Endothelial cell of umbilical vein (primary cell): ENCODE measurements at regions of chr5 and their contacts with region 1.

Region 1: DNA sequence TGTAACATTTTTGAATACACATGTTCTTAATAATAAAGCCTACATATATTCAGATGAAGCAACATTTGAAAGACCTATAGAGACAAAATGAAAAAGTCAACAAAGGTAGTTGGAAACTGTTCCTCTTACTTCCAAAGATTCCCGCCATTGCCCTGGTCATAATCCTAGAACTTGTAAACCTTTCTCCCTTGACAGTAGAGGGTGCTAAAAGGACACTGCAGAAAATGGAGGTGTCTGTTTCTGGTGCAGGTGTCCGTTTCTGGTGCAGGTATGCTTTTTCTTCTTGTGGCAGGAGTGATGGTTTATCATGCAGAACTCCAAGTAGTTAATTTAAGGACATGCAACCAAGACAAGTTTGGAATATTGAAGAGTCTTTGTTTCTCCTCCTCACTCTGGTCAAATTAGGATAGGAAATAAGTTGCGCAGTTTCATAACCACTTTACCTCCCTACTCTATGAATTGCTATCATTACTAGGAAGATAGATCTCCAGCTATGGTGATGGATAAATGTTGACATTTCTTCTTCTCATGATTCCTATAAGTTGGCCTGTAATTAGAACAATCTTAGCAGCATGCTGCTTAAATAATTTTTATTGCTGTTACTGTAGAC is 56.0 kb upstream of the FAM174A start:
- DNase-seq: peak; percentile 24
- H3K4me3 ChIP-seq: no peak overlapping the region
- H3K27ac ChIP-seq: no peak overlapping the region
- H3K4me1 ChIP-seq: no peaks in the 10 kb centered on the region
- H3K27me3 ChIP-seq: no peaks in the 10 kb centered on the region
- CTCF ChIP-seq: peak; percentile 20 to 25
- POLR2A ChIP-seq: no peak

Region 2: DNA sequence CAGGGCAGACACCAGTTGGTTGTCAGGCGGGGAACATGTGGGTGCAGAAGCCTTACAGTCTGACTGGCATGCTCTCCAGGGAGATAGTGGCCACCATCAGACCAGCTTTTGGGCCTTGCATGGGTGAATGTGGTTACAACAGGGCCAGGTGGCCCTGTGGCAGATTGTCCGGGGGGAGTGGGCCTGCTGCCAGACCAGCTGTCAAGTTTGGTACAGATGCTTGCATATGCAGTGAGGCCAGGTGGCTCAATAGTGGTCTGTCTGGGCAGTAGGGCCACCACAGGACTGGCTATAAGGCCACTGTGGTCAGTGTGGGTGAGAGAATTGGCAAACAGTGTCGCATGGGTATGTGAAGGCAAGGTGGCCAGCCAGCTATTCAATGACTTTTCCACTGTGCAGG is 204.7 kb after region 1 on chr5:
- CTCF ChIA-PET with region 1: no interaction called
- POLR2A ChIA-PET with region 1: no interaction called
- dilution Hi-C with region 1: no loop called
- intact Hi-C with region 1: loop called (anchors 10 kb)
- DNase-seq: no peak
- H3K4me3 ChIP-seq: no peak overlapping the region
- H3K27ac ChIP-seq: no peak overlapping the region
- H3K4me1 ChIP-seq: peaks cover 8% of the 10 kb centered on the region
- H3K27me3 ChIP-seq: no peaks in the 10 kb centered on the region
- CTCF ChIP-seq: no peak
- POLR2A ChIP-seq: no peak

Region 3: DNA sequence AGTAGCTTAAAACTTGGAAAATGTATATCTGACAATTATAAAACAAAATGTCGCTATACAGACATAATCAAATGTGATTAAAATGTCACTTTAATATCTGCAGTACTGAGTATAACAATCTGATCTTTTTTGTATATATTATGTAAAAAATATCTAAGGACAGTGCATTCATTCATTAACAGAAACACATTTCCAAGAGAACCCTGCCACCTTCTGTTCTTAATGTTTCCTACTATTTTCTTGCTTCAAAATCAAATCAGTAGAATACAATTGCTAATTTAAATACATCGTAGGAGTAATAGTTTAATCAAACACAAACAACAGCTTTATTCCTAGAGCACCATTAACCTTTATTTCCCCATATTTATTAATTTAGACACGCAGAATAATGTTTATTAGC is 566.5 kb after region 1 on chr5:
- CTCF ChIA-PET with region 1: no interaction called
- POLR2A ChIA-PET with region 1: no interaction called
- dilution Hi-C with region 1: no loop called
- intact Hi-C with region 1: loop called (anchors 1 kb)
- DNase-seq: peak; percentile 55
- H3K4me3 ChIP-seq: no peak overlapping the region
- H3K27ac ChIP-seq: no peak overlapping the region
- H3K4me1 ChIP-seq: no peaks in the 10 kb centered on the region
- H3K27me3 ChIP-seq: no peaks in the 10 kb centered on the region
- CTCF ChIP-seq: no peak
- POLR2A ChIP-seq: no peak

Region 4: GRCh38 chr5:101390151-101390908 is 911.1 kb after region 1 on chr5:
- CTCF ChIA-PET with region 1: no interaction called
- POLR2A ChIA-PET with region 1: no interaction called
- dilution Hi-C with region 1: no loop called
- intact Hi-C with region 1: loop called (anchors 1 kb)
- DNase-seq: peak; percentile 78
- H3K4me3 ChIP-seq: no peak overlapping the region
- H3K27ac ChIP-seq: no peak overlapping the region
- H3K4me1 ChIP-seq: no peaks in the 10 kb centered on the region
- H3K27me3 ChIP-seq: no peaks in the 10 kb centered on the region
- CTCF ChIP-seq: peak; percentile 49 to 60
- POLR2A ChIP-seq: no peak

Region 5: GRCh38 chr5:101678481-101679193 is 1199.5 kb after region 1 on chr5:
- CTCF ChIA-PET with region 1: no interaction called
- POLR2A ChIA-PET with region 1: no interaction called
- dilution Hi-C with region 1: no loop called
- intact Hi-C with region 1: loop called (anchors 2 kb)
- DNase-seq: peak; percentile 71
- H3K4me3 ChIP-seq: no peak overlapping the region
- H3K27ac ChIP-seq: no peak overlapping the region
- H3K4me1 ChIP-seq: no peaks in the 10 kb centered on the region
- H3K27me3 ChIP-seq: no peaks in the 10 kb centered on the region
- CTCF ChIP-seq: peak; percentile 82 to 93
- POLR2A ChIP-seq: no peak